Activated T-helper 1 cell treated with anti-CD3 and anti-CD28 coated beads, Interleukin-12 subunit alpha, Interleukin-12 subunit beta, Interleukin-2, Interleukin-4 antibody, amounts not matched to agents 30 ng/mL and 10 ng/mL and 1 ng/mL, durations not matched to agents 14 hours and 24 hours and 36 hours (primary cell): ENCODE measurements at regions of chrX and their contacts with region 1.

Region 1: GRCh38 chrX:12999422-12999821 is 24.5 kb downstream of the TMSB4X start:
- DNase-seq: peak; percentile 51
- H3K4me3 Mint-ChIP-seq: peak overlapping the region; percentile 63
- H3K27ac Mint-ChIP-seq: peak overlapping the region; percentile 98
- H3K4me1 Mint-ChIP-seq: peaks cover 59% of the 10 kb centered on the region
- H3K27me3 Mint-ChIP-seq: no peaks in the 10 kb centered on the region

Region 2: DNA sequence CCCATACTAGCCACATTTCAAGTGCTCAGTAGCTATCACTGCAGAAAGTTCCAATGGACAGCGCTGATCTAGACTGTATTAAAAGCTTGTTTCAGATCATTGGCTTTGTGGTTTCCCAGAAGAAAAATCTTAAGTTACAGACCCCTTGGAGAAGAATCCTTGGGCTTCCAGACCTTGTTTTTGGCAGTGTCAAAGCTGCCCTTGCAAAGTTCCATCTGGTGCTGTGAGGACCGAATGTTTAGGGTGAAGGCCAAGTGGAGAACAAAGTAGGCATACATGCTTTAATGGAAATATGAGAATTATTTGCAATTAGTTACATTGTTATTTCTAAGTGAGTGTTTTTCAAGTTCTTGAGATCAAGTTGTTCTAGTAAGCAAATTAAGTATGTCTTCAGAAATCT is 716.4 kb before region 1 on chrX:
- intact Hi-C with region 1: no loop called
- DNase-seq: no peak
- H3K4me3 Mint-ChIP-seq: no peak overlapping the region
- H3K27ac Mint-ChIP-seq: no peak overlapping the region
- H3K4me1 Mint-ChIP-seq: no peaks in the 10 kb centered on the region
- H3K27me3 Mint-ChIP-seq: no peaks in the 10 kb centered on the region

Region 3: DNA sequence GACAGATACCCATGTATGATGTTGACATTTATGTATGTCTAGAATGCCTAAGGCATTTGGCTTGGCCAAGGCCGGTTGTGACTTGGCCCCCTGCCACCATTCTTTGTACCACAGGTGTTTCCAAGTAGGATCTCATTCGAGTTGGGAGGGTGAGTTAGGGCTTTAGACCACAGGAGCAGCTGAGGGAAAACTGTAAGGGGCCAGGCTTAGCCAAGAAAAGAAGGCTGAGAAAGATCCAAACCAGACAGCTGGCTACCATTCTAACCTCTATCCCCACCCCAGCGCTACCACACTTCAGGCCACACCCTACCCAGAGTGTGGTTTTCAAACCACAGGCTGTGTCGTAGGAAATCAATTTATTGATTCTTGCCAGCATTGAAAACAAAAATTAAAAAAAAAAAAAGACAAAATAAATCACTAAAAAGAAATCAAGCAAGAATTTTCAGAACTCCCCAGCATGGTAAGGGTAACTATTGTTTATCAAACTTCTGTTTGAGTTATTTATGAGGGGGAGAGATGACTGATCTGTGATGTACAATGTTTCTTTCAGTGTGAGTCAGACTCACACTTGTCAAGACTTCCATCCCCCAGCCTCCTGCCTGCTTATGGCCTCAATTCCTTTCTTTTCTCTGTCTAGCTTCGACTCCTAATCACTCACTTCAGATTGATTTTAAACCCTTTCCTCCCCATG is 14.6 kb before region 1 on chrX:
- intact Hi-C with region 1: loop called (anchors 1 kb)
- DNase-seq: peak; percentile 59
- H3K4me3 Mint-ChIP-seq: peak overlapping the region; percentile 45
- H3K27ac Mint-ChIP-seq: peak overlapping the region; percentile 93
- H3K4me1 Mint-ChIP-seq: peaks cover 65% of the 10 kb centered on the region
- H3K27me3 Mint-ChIP-seq: no peaks in the 10 kb centered on the region

Region 4: DNA sequence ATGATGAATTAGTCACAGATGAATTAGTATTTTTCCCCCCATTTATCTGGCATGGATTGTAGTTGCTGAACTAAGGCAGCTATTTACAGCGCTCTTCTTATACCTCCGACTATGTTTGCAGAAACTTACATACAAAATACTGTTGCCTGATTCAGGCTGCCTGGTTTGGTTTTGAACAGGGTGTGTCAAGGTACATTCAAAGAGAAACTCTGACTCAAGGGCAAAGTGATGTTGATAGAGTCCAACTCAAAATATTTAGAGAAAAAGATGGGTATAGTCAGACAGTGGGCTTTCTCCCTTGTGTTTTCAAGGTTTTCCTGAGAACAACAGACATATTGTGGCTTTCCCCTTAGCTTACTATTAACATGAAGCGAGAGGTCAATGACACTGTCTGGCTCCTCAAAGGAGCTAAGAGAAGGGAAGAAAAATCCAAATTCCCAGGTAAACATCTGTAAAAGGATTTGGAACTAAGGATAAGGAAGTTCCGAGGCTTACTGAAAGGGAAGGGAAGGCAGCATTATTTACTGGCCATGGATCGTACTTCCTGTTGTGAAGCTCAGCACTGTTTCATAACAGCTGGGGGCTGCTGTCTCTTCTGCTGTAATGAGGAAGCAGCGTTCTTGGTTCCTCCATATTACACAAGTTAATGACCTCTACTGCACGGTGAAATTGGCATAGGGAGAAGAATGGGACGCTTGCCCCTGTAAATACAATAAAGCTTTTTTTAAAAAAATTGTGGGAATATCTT is 14.1 kb after region 1 on chrX:
- intact Hi-C with region 1: loop called (anchors 2 kb)
- DNase-seq: no peak
- H3K4me3 Mint-ChIP-seq: peak overlapping the region; percentile 12
- H3K27ac Mint-ChIP-seq: peak overlapping the region; percentile 75
- H3K4me1 Mint-ChIP-seq: peaks cover 64% of the 10 kb centered on the region
- H3K27me3 Mint-ChIP-seq: no peaks in the 10 kb centered on the region

Region 5: DNA sequence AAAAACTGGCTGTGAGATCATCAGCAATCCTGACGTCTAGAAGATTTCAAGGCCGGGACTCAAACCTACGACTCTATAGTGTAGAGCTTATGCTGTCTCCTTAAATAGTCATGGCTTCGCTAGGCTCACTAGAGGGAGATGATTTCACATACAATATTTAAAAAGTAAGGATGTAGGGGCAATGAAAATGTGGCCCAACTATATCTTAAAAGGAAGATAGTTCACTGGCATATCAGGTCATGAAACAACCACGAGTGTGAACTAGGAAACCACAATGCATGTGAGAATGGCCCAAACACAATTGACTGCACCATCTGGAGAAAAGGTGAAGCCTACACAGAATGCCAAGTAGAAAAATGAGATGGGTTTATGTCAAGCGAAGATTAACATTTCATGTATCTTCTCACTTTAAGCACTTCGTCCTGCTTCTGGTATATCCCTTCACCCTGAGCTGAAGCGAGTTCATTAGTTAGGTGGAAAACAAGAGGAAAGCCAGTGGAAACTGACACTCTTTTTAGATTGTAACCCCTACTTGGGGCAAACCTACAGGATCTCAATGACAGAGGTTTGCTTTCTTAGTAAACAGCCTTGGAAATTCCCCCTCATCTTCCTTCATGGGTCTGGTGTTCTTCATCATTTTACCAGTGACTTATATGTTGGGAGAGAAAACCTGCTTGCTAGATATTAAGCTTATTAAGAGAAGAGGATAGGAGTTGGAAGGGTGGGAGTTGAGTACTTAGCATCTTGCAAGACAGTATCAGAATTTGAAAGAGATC is 27.6 kb after region 1 on chrX:
- intact Hi-C with region 1: loop called (anchors 2 kb)
- DNase-seq: no peak
- H3K4me3 Mint-ChIP-seq: peak overlapping the region; percentile 15
- H3K27ac Mint-ChIP-seq: peak overlapping the region; percentile 82
- H3K4me1 Mint-ChIP-seq: peaks cover 75% of the 10 kb centered on the region
- H3K27me3 Mint-ChIP-seq: no peaks in the 10 kb centered on the region

Region 6: GRCh38 chrX:13051529-13052172 is 52.2 kb after region 1 on chrX:
- intact Hi-C with region 1: loop called (anchors 1 kb)
- DNase-seq: no peak
- H3K4me3 Mint-ChIP-seq: peak overlapping the region; percentile 37
- H3K27ac Mint-ChIP-seq: peak overlapping the region; percentile 89
- H3K4me1 Mint-ChIP-seq: peaks cover 65% of the 10 kb centered on the region
- H3K27me3 Mint-ChIP-seq: peaks cover 1% of the 10 kb centered on the region